ENCODE measurements at regions of chr5 and their contacts with region 1.

Region 1: GRCh38 chr5:157148734-157149615 is 6.3 kb upstream of the MED7 start:
- DNase-seq: peak; percentile 46 to 86 (median 80)
- ATAC-seq: peak; percentile 94
- H3K4me3 ChIP-seq: no peak overlapping the region
- H3K4me3 Mint-ChIP-seq: peak overlapping the region in 7 of 10 donors; percentile 1 to 73 (median 33)
- H3K27ac ChIP-seq: peak overlapping the region; percentile 42
- H3K27ac Mint-ChIP-seq: peak overlapping the region; percentile 5 to 85 (median 80)
- H3K4me1 ChIP-seq: peaks cover 15 to 31% of the 10 kb centered on the region in 2 donors
- H3K4me1 Mint-ChIP-seq: peaks cover 25 to 56% (median 42%) of the 10 kb centered on the region in 7 donors
- H3K27me3 ChIP-seq: no peaks in the 10 kb centered on the region
- H3K27me3 Mint-ChIP-seq: no peaks in the 10 kb centered on the region

Region 2: DNA sequence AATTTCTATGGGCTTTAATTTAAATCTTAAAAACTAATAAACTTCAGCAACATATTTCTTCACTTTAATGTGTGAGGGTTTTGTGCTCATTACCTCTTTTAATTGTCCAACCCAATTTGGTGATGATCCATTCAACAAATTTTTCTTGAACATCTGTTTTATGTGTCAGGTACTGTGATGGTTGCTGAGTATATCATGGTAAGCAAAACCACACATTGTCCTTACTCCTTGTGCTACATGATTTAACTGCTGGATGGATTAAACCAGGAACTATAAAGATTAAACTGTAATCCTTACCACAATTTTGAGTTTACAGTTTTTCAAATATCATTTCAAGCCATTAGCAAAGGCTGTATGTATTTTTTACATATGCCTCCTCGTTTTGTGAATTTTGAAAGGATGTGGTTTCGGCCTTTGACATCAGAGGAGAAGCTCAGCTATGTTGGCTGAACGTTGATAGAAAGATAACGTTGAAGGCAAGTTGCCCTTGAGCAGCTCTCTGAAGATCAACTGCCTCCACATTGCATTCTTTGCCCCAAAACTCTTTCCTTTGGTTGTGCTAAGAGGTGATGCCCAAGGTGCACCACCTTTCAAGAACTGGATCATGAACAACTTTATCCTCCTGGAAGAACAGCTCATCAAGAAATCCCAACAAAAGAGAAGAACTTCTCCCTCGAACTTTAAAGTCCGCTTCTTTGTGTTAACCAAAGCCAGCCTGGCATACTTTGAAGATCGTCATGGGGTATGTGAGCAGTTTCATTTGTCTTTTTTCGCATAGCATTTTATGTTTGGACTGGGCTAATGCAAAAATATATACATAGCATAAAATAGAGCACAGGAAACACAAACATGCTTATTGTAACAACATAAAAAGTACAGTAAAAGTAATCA is 31.6 kb after region 1 on chr5 and contains the start of gene ITK:
- CTCF ChIA-PET with region 1: interaction called, 9 read pairs
- POLR2A ChIA-PET with region 1: interaction called, 62 read pairs
- intact Hi-C with region 1: loop called (anchors 1 kb)
- DNase-seq: peak in 7 of 9 donors; percentile 66 to 84 (median 77)
- ATAC-seq: peak; percentile 88
- H3K4me3 ChIP-seq: peak within 1 kb of the TSS; percentile 62
- H3K4me3 Mint-ChIP-seq: peak within 1 kb of the TSS; percentile 89 to 100 (median 97)
- H3K27ac ChIP-seq: peak within 1 kb of the TSS; percentile 81
- H3K27ac Mint-ChIP-seq: peak within 1 kb of the TSS; percentile 91 to 99 (median 96)
- H3K4me1 ChIP-seq: peaks cover 33 to 42% of the 10 kb centered on the region in 2 donors
- H3K4me1 Mint-ChIP-seq: peaks cover 27 to 61% (median 50%) of the 10 kb centered on the region in 7 donors
- H3K27me3 ChIP-seq: no peaks in the 10 kb centered on the region
- H3K27me3 Mint-ChIP-seq: no peaks in the 10 kb centered on the region
- total RNA-seq, gene ITK: 278 to 481 (median 324) TPM

Region 3: DNA sequence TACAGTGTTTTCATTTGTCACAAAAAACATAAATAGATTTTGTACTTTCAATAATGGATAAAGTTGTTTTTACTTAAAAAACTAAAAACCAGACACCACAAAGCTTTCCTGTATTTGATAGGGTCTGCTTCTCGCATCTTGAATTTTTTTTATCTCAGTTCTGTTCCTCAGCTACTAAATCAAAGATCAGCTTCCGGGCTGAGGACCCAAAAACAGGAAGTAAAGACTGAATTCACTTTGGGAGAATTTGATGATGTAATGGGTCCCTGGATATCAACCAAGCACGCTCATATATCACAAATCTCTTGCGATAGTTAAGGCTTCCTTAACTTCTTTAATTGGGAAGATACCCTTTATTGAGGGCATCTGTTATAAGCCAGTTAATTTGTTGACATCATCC is 55.8 kb after region 1 on chr5:
- CTCF ChIA-PET with region 1: interaction called, 8 read pairs
- POLR2A ChIA-PET with region 1: interaction called, 20 read pairs
- intact Hi-C with region 1: loop called in 1 of 2 experiments (anchors 5 kb)
- DNase-seq: peak in 7 of 9 donors; percentile 44 to 84 (median 73)
- ATAC-seq: peak; percentile 69
- H3K4me3 ChIP-seq: peak overlapping the region; percentile 10
- H3K4me3 Mint-ChIP-seq: peak overlapping the region; percentile 7 to 93 (median 76)
- H3K27ac ChIP-seq: peak overlapping the region; percentile 64
- H3K27ac Mint-ChIP-seq: peak overlapping the region; percentile 79 to 98 (median 95)
- H3K4me1 ChIP-seq: peaks cover 77 to 87% of the 10 kb centered on the region in 2 donors
- H3K4me1 Mint-ChIP-seq: peaks cover 43 to 96% (median 90%) of the 10 kb centered on the region in 7 donors
- H3K27me3 ChIP-seq: no peaks in the 10 kb centered on the region
- H3K27me3 Mint-ChIP-seq: no peaks in the 10 kb centered on the region

Region 4: DNA sequence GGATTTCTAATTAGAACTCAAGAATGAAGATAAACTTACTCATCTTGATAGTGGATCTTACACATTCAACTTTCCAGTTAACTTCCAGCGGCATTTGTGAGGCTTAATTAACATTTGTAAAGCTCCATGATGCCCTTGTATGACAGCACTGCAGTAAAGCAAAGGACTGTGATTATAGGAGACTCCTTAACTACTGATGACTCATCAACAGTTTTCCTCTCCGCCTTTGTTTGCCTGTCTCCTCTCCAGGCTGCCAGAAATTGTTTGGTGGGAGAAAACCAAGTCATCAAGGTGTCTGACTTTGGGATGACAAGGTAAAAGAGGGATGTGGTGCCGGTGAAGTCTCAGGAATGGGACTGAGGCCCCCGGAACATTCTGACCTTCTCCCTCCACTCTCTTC is 96.5 kb after region 1 on chr5:
- CTCF ChIA-PET with region 1: interaction called, 12 read pairs
- POLR2A ChIA-PET with region 1: interaction called, 24 read pairs
- intact Hi-C with region 1: loop called in 1 of 2 experiments (anchors 1 kb)
- DNase-seq: no peak
- ATAC-seq: no peak
- H3K4me3 ChIP-seq: no peak overlapping the region
- H3K4me3 Mint-ChIP-seq: peak overlapping the region in 3 of 10 donors; percentile 23 to 75 (median 27)
- H3K27ac ChIP-seq: peak overlapping the region; percentile 36
- H3K27ac Mint-ChIP-seq: peak overlapping the region; percentile 63 to 98 (median 86)
- H3K4me1 ChIP-seq: peaks cover 45 to 67% of the 10 kb centered on the region in 2 donors
- H3K4me1 Mint-ChIP-seq: peaks cover 41 to 87% (median 81%) of the 10 kb centered on the region in 7 donors
- H3K27me3 ChIP-seq: no peaks in the 10 kb centered on the region
- H3K27me3 Mint-ChIP-seq: no peaks in the 10 kb centered on the region

Region 5: GRCh38 chr5:157328277-157328912 is 179.4 kb after region 1 on chr5:
- CTCF ChIA-PET with region 1: interaction called, 3 read pairs
- POLR2A ChIA-PET with region 1: interaction called, 7 read pairs
- intact Hi-C with region 1: loop called in 1 of 2 experiments (anchors 1 kb)
- DNase-seq: peak in 8 of 9 donors; percentile 42 to 67 (median 60)
- ATAC-seq: peak; percentile 93
- H3K4me3 ChIP-seq: no peak overlapping the region
- H3K4me3 Mint-ChIP-seq: peak overlapping the region; percentile 29 to 80 (median 68)
- H3K27ac ChIP-seq: peak overlapping the region; percentile 63
- H3K27ac Mint-ChIP-seq: peak overlapping the region; percentile 71 to 95 (median 91)
- H3K4me1 ChIP-seq: peaks cover 10 to 24% of the 10 kb centered on the region in 2 donors
- H3K4me1 Mint-ChIP-seq: peaks cover 28 to 50% (median 45%) of the 10 kb centered on the region in 7 donors
- H3K27me3 ChIP-seq: no peaks in the 10 kb centered on the region
- H3K27me3 Mint-ChIP-seq: no peaks in the 10 kb centered on the region

Region 6: DNA sequence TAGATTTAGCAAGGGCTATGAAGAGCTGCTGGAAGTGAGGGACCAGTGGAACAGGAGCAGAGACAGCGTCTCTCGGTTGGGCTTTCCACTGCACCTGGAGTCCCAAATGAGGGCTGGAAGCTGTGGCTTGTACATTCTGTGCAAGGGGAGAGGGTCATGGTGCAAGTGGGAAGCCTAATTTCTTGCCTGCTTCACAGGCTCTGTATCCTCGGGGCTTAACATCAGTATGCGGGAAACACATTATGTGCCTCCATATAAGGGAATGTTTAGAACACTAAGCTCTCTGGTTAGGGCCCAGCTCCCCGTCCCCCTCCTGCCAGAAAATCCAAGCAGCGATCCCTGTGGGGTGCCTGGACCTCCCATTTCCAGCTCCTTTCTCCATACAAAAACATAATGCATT is 222.0 kb after region 1 on chr5:
- CTCF ChIA-PET with region 1: no interaction called
- POLR2A ChIA-PET with region 1: no interaction called
- intact Hi-C with region 1: no loop called
- DNase-seq: no peak
- ATAC-seq: no peak
- H3K4me3 ChIP-seq: no peak overlapping the region
- H3K4me3 Mint-ChIP-seq: no peak overlapping the region
- H3K27ac ChIP-seq: no peak overlapping the region
- H3K27ac Mint-ChIP-seq: peak overlapping the region in 8 of 9 donors; percentile 8 to 82 (median 70)
- H3K4me1 ChIP-seq: no peaks in the 10 kb centered on the region
- H3K4me1 Mint-ChIP-seq: peaks cover 0 to 18% (median 5%) of the 10 kb centered on the region in 7 donors
- H3K27me3 ChIP-seq: no peaks in the 10 kb centered on the region
- H3K27me3 Mint-ChIP-seq: no peaks in the 10 kb centered on the region

Measured in naive thymus-derived CD4-positive, alpha-beta T cell (primary cell).